GM10248 (cell line): ENCODE measurements at regions of chr9 and their contacts with region 1.

Region 1: DNA sequence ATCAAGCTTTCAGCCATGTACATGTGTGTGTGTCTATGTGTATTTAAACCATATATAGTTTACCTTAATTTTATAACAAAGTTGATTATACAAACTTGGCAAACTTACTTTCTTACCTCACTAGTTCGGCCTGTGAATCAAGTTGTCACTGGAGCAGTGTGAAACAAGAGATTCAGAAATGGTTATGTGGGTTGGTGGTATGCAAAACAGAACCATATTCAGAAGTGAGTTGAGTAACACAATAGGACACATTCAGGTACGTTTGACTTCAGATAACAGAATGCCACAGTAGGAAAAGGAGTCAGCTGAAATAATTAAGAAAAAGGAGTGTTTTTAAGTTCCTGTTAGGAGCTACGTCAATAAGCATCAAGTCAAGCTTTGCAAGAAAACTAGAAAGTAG is 21.5 kb downstream of the XPA start:
- DNase-seq: no peak
- CTCF ChIP-seq: no peak

Region 2: DNA sequence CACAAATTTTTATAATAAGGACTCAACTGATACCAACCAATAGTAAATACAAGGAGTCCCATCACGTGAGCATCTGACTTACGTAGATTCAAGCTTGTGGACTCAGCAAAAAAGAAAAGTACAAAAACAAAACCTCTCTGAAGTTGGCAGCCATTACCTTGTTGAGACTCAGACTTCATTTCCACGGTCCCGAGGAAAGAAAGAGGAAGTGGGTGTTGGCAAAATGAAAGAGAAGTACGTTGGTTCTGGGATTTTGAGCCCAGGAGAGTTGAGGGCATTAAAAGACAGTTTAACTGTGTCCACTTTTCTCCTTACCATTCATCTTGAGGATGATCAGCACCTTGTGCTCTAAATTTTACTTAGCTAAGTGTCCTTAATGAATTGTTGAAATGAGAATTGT is 15.3 kb before region 1 on chr9:
- CTCF ChIA-PET with region 1: interaction called, 11 read pairs
- POLR2A ChIA-PET with region 1: no interaction called
- DNase-seq: no peak
- CTCF ChIP-seq: no peak

Region 3: DNA sequence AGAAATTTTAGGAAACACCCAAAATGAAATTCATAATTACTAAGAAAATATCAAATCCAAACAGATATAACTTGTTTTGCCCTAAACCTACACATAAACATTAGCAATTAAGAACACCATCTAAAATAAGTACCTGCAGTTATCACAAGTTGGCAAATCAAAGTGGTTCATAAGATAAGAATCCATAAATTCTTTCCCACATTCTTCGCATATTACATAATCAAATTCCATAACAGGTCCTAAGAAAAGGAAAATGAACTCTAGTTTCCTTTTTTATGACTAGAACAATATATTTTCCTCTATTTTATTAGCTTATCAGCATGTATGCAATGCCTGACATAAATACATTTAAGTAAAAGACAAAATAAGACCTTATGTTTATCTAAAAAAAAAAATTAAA is 13.7 kb after region 1 on chr9:
- CTCF ChIA-PET with region 1: interaction called, 16 read pairs
- POLR2A ChIA-PET with region 1: no interaction called
- DNase-seq: no peak
- CTCF ChIP-seq: no peak

Region 4: GRCh38 chr9:97703437-97704344 is 28.0 kb after region 1 on chr9:
- CTCF ChIA-PET with region 1: no interaction called
- POLR2A ChIA-PET with region 1: no interaction called
- DNase-seq: no peak
- CTCF ChIP-seq: no peak

Region 5: DNA sequence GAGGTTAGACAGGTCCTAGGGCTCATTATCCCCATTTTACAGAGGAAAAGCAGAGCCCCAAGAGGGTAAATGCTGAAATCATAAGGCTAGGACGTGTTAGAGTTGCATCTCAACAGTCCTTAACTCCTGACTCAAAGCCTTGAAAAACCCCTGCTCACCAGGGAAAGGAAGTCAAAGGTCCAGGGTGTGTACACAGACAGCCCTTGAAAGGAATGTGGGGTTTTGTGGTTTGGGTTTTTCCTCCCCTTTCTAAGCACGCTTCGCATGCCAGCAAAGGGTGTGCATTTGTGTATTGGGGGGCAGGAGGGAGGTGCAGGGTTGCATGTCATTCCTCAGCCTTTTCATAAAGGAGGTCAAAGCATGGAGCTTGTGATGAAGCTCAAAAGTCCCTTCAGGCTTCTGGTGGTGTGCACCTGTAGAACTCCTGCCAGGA is 38.7 kb after region 1 on chr9:
- CTCF ChIA-PET with region 1: no interaction called
- POLR2A ChIA-PET with region 1: no interaction called
- DNase-seq: no peak
- CTCF ChIP-seq: no peak

Region 6: DNA sequence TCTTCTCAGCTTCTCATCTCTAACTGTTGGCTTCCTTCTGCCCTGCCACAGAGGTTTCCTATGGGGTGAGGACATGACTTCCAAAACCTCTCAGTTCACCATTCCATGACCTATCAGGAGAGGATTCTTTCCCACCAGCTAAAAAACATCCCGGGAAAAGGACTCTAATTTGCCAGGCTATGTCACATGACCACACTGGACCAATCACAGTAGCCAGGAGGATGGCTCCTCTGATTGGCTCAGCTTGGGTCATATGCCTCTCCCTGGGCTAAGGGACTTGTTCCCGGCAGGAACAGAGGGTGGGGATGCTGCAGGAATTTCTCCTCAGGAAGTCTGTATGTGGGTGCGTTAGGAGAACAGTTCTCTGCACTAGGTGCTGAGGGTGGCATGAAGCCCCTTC is 61.8 kb after region 1 on chr9:
- CTCF ChIA-PET with region 1: no interaction called
- POLR2A ChIA-PET with region 1: no interaction called
- DNase-seq: no peak
- CTCF ChIP-seq: no peak